ENCODE measurements at regions of chr13 and their contacts with region 1.

Region 1: GRCh38 chr13:99374994-99375737 is 68.0 kb upstream of the GPR183 start:
- DNase-seq: peak; percentile 85 to 96 (median 93)
- H3K4me3 ChIP-seq: peak overlapping the region in 3 of 7 experiments; percentile 18 to 53 (median 50)
- H3K27ac ChIP-seq: peak overlapping the region; percentile 64 to 76
- H3K4me1 ChIP-seq: peaks cover 4 to 35% (median 32%) of the 10 kb centered on the region in 4 experiments
- H3K27me3 ChIP-seq: no peaks in the 10 kb centered on the region

Region 2: DNA sequence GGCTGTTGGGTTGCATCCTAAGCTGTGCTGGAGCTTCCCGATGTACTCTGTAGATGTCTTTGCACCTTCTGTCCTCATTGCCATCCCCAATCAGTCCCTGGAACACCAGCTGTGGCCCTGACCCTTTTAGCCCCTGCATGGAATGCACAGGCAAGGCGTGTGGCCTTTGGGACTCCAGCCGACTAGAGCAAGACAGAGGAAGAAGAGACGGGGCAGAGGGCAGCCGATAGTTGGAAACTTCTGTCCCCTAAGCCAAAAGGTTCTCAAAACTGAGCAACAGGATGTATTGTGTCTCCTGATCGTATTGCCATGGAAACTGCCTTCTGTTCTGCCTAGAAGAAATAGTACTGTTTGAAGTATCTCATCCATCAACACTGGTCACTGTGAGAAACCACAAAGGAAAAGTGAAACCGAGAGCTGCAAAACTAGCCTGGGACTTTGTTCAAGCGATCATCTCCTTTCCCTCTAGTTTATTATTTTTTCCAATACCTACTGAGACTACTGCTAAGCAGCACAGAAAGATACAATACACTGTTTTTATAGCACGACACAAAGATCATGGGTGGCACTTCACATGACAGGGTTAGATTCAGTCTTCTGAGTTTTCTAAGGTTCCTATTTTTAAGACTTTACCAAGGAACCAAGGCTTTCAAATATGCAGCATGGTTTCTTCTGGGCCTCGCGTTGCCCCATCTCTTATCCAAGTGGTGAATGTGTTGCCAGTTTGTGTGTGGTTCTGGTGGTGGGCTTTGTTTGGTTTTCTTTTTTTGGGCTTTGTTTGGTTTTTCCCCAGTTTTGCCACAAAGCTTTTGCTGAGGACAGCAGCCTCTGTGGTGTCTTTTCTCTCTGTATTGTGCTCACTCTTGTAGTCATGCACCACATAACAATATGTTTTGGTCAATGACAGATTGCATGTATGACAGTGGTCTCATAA is 18.7 kb before region 1 on chr13:
- CTCF ChIA-PET with region 1: interaction called, 4 read pairs
- POLR2A ChIA-PET with region 1: interaction called, 12 read pairs
- DNase-seq: peak; percentile 94 to 99 (median 98)
- H3K4me3 ChIP-seq: peak overlapping the region in 6 of 7 experiments; percentile 3 to 50 (median 30)
- H3K27ac ChIP-seq: peak overlapping the region; percentile 93 to 96
- H3K4me1 ChIP-seq: peaks cover 16 to 56% (median 47%) of the 10 kb centered on the region in 4 experiments
- H3K27me3 ChIP-seq: no peaks in the 10 kb centered on the region

Region 3: GRCh38 chr13:99395436-99395835 is 20.3 kb after region 1 on chr13:
- CTCF ChIA-PET with region 1: no interaction called
- POLR2A ChIA-PET with region 1: no interaction called
- DNase-seq: no peak
- H3K4me3 ChIP-seq: no peak overlapping the region
- H3K27ac ChIP-seq: no peak overlapping the region
- H3K4me1 ChIP-seq: no peaks in the 10 kb centered on the region
- H3K27me3 ChIP-seq: peaks cover 0 to 2% (median 0%) of the 10 kb centered on the region in 5 experiments